Testis (tissue), 5 donors: ENCODE measurements at regions of chr12 and their contacts with region 1.

Region 1: GRCh38 chr12:57118711-57119271 is 7.6 kb upstream of the STAT6 start:
- DNase-seq: no peak
- H3K4me3 ChIP-seq: no peak overlapping the region
- H3K27ac ChIP-seq: no peak overlapping the region
- H3K4me1 ChIP-seq: no peaks in the 10 kb centered on the region
- H3K27me3 ChIP-seq: no peaks in the 10 kb centered on the region
- CTCF ChIP-seq: no peak
- POLR2A ChIP-seq: no peak

Region 2: DNA sequence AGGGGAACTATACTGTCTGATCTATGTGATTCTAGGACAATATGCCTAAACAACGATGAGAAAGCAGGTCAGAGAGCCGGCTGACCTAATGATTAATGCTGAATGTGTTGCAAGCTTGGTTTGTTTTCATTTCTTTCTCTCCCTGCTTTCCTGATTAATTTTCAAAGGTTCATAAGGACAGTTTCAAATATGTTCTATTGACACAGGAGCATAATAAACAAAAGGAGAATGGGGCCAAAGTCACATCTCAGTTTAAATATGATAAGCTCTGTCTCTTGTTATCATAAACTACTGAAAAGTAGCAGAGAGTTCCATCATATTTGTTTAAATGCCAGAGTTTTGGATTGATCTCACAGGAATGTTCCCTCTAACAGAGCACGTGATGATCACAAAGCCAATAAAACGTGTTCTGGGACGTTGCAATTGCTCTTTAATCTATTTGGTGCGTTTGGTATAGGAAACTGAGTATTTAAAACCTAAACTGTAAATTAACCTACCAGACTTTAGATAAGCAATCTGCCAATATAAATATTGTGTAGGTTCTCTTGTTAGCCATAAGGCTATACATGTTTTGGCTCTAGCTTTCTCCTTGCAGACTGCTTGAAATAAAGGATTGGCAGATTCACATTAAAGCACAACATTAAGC is 359.4 kb before region 1 on chr12:
- intact Hi-C with region 1: loop called (anchors 5 kb)
- DNase-seq: no peak
- H3K4me3 ChIP-seq: no peak overlapping the region
- H3K27ac ChIP-seq: peak overlapping the region in 1 of 2 donors; percentile 4
- H3K4me1 ChIP-seq: no peaks in the 10 kb centered on the region
- H3K27me3 ChIP-seq: no peaks in the 10 kb centered on the region
- CTCF ChIP-seq: no peak
- POLR2A ChIP-seq: no peak

Region 3: DNA sequence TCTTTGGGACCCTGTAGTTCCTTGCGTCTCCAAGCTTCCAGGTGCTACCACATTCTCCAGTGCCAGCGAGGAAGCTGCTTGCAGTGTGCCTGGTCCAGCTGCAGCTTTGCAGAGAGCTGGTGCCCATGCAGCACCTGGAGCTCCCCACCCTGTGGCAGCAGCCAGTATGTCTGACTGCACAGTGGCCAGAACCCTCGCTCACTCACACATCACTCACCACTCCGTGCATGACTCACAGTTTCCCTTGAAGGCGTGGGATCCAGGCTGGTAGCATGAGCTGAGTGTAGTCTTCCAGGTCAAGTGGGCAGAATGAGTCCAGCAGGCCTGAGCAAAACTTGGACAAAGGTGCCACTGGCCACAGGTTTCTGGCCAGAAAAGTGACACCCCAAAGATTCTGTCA is 218.2 kb before region 1 on chr12:
- intact Hi-C with region 1: no loop called
- DNase-seq: no peak
- H3K4me3 ChIP-seq: no peak overlapping the region
- H3K27ac ChIP-seq: no peak overlapping the region
- H3K4me1 ChIP-seq: no peaks in the 10 kb centered on the region
- H3K27me3 ChIP-seq: no peaks in the 10 kb centered on the region
- CTCF ChIP-seq: no peak
- POLR2A ChIP-seq: no peak